Head of caudate nucleus (tissue), 42 donors: ENCODE measurements at regions of chr2 and their contacts with region 1.

Region 1: GRCh38 chr2:65227425-65228262 is at the start of gene ACTR2:
- DNase-seq: peak; percentile 93 to 98 (median 97)

Region 2: DNA sequence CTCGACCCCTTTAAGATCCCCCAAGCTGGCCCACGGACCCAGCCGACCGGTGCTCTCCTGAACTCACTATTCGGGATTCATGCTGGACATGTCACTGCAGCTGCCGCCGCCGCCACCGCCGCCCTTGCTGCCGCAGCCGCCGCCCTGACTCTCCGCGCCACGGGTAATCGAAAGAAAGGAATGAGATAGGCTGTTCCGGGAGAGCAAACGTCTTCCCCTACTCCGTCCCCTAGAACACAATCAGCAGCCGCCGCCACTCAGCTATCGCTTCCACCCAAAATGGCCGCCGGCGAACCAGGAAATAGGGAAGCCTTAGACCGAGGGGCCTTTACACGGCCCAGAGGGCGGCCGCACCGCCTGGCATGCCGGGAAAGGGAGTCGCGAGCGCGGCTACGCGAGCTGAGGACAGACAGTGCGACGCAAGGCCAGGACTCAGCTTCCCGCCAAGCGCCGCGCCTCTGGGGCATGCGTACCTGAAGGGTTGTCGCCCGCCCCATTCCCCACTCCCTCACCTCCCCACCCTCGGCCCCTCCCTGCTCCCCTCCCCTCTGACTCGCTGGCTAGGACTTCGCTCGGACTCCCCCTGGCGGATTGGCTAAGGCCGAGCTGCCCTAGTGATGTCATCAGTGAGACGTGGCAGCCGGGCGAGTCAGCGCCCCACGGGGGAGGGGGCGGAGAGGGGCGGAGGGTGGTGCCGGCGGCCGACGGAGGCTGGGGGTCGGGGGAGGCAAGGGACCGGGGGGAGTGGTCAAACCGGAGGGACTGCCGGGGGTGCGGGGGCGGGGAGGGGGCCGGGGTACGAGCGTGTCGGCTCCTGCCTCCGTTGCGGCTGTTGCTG is 97.6 kb before region 1 on chr2 and contains the start of gene RAB1A:
- intact Hi-C with region 1: loop called (anchors 5 kb)
- DNase-seq: peak; percentile 98 to 100 (median 99)

Region 3: DNA sequence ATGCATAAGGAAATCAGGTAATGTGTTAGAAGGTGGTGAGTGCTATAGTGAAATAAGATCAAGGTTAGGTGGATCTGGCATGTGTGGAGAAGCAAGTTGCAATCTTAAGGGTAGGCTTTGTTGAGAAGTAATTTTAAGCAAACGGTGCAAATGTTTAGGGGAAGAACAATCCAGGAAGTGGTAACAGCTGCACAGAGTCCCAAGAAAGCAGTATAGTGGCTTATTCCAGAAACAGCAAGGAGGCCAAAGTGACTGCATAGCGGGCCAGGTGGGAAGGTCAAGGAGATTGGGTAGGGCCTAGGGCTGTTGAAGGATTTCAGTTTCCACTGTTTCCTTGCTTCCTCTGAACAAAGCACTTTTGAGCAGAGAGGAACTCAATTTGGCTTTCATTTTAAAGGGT is 67.7 kb before region 1 on chr2:
- intact Hi-C with region 1: no loop called
- DNase-seq: peak in 1 of 42 donors; percentile 6

Region 4: DNA sequence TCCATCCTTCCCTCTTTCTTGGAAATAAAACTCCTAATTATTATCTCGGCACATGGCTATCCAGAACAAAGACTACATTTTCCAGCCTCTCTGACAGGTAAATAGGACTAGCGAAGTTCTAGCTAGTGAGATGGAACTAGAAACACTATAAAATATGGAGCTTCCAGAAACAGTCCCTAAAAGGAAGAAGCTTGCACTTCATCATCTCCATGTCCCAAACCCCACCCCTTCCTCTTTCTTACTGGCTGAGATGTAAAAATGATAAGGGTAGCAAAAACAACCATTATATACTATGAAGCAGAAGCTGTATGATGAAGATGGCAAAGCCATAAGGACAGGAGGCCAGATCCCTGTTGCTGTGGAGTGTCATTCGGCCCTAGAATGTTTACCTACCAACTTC is 11.7 kb before region 1 on chr2:
- intact Hi-C with region 1: no loop called
- DNase-seq: no peak

Region 5: DNA sequence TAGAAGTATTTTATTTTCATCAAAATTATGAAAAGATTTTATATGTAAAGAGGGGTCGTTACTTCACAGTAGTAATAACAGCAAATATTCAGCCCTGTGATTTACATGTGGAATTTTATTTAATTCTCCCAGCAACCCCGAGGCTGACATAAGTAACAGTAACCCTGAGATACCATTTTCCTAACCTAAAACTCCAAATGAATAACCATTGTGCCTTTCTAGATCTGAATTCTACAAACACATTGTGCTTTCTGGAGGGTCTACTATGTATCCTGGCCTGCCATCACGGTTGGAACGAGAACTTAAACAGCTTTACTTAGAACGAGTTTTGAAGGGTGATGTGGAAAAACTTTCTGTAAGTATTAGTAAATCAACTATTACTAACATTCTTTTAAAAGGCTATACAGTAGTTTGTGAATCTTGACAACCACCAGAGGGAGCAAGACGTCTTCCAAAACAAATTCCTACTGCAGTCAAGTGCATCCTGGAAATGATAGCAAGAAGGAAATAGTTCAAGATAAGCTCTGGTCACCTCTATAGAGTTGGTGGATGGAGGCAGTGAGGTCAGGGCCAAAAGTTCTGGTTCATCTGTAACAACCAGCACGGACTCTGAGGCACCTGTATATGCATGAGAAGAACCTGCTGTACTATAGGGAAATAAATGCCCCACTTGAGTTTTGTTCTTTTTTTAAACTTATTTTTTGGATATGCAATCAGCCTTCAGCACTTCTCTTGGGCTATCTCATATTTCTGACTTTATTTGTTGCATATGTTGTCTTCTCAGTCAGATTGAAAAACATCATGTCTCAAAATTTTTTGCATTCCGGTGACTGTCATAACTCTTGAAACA is 37.4 kb after region 1 on chr2:
- intact Hi-C with region 1: no loop called
- DNase-seq: peak in 24 of 42 donors; percentile 18 to 79 (median 50)

Region 6: GRCh38 chr2:65545837-65546805 is 318.5 kb after region 1 on chr2:
- intact Hi-C with region 1: no loop called
- DNase-seq: no peak